Colonic mucosa (tissue), 4 donors: ENCODE measurements at regions of chr12 and their contacts with region 1.

Region 1: GRCh38 chr12:118404876-118405521 is 28.6 kb downstream of the SUDS3 start:
- DNase-seq: peak; percentile 67
- H3K4me3 ChIP-seq: no peak overlapping the region
- H3K27ac ChIP-seq: no peak overlapping the region
- H3K4me1 ChIP-seq: no peaks in the 10 kb centered on the region
- H3K27me3 ChIP-seq: no peaks in the 10 kb centered on the region
- CTCF ChIP-seq: peak; percentile 71

Region 2: GRCh38 chr12:118840399-118840798 is 435.4 kb after region 1 on chr12:
- intact Hi-C with region 1: loop called (anchors 10 kb)
- DNase-seq: no peak
- H3K4me3 ChIP-seq: no peak overlapping the region
- H3K27ac ChIP-seq: no peak overlapping the region
- H3K4me1 ChIP-seq: no peaks in the 10 kb centered on the region
- H3K27me3 ChIP-seq: no peaks in the 10 kb centered on the region
- CTCF ChIP-seq: no peak

Region 3: DNA sequence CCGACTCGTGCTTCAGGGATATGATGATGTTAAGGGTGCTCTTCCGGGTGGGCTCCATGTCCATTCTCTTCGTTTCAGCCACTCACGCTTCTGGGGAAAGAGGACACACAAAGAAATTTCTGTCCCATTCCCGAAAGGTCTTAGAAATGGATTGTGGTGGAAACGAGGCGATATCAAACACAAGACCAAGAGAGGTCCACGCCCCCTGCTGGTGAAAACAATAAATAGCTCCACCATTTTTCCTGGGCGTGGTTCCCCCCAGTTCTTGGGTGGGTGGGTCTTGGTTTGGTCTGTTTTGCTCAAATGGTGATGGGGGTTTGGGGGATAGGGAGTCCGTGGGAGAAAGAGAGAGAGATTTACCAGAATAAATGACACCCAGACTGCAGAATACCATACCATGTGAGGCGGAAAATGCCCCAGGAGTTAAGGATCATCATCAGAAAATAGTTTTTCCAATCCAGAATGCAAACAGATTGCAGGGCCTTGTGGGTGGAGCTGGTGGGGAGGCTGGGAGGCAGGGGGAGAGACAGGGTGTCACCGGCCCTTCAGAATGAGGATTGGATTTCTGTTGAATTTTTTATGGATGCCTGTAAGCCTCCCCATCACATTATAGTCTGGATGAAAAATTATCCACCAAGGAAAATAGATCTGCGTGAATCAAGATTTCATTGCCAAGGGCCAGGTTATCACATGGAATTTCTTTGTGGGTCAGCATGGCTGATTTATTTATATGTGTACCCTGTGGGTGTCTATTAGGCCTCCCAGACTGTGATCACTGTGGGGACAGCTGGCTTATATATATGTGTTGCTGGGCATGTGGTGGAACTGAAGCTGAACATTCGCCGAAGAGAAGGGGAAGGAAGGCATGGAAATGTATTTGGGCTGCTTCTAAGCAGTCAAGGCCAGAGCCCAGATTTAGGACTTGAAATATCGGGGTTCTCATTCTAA is 632.2 kb after region 1 on chr12:
- intact Hi-C with region 1: loop called (anchors 10 kb)
- DNase-seq: peak; percentile 21
- H3K4me3 ChIP-seq: no peak overlapping the region
- H3K27ac ChIP-seq: no peak overlapping the region
- H3K4me1 ChIP-seq: no peaks in the 10 kb centered on the region
- H3K27me3 ChIP-seq: no peaks in the 10 kb centered on the region
- CTCF ChIP-seq: no peak